Ascending aorta (tissue), 2 donors: ENCODE measurements at regions of chr4 and their contacts with region 1.

Region 1: GRCh38 chr4:76179398-76180318 is 31.5 kb upstream of the NUP54 start:
- DNase-seq: peak in 1 of 2 donors; percentile 92
- H3K4me3 ChIP-seq: no peak overlapping the region
- H3K27ac ChIP-seq: no peak overlapping the region
- H3K4me1 ChIP-seq: no peaks in the 10 kb centered on the region
- H3K27me3 ChIP-seq: no peaks in the 10 kb centered on the region
- CTCF ChIP-seq: peak; percentile 61 to 90 (median 88)

Region 2: GRCh38 chr4:75211408-75211807 is 968.2 kb before region 1 on chr4:
- intact Hi-C with region 1: no loop called
- DNase-seq: no peak
- H3K4me3 ChIP-seq: no peak overlapping the region
- H3K27ac ChIP-seq: no peak overlapping the region
- H3K4me1 ChIP-seq: no peaks in the 10 kb centered on the region
- H3K27me3 ChIP-seq: no peaks in the 10 kb centered on the region
- CTCF ChIP-seq: no peak

Region 3: GRCh38 chr4:75973766-75974165 is 205.9 kb before region 1 on chr4:
- intact Hi-C with region 1: no loop called
- DNase-seq: no peak
- H3K4me3 ChIP-seq: no peak overlapping the region
- H3K27ac ChIP-seq: no peak overlapping the region
- H3K4me1 ChIP-seq: no peaks in the 10 kb centered on the region
- H3K27me3 ChIP-seq: no peaks in the 10 kb centered on the region
- CTCF ChIP-seq: no peak

Region 4: DNA sequence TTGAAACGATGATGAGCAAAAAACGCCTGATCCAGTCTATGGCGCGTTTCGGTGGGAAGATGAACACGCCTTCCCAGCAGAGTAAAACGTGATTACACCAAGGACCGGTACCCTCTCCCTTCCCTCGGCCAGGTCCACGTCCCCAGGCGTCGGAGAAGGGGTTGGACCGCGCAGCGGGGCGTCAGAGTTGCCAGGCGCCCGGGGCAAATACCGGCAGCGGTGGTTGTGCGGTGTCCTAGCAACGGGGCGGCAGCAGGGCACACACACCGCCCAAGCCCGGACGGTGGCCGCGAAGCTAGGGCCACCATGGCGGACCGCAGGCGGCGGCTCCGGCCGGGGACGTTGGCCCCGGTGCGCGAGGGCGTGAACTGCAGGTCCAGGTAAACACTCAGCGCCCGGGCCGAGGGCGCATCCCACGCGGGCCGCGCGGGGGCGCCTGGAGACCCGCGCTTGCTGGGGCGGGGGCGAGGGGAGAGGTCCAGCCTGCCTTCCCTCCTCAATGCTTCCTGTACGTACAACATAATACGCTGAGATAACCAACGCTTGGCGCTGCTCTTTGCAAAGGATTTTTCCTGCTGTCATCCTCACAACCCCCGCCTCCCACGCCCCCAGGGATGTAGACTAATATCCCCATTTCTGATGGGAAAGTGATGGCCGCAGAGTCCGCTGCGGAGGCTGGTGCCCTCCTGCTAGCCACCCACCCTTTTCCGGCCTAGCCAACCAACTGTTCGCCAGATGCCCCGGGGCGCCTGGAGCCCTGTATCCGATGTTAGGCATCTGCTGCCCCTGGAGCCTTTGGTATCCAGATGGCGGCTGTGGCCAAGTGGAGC is 72.0 kb after region 1 on chr4 and contains the start of gene FAM47E:
- intact Hi-C with region 1: loop called (anchors 1 kb)
- DNase-seq: peak; percentile 10 to 83
- H3K4me3 ChIP-seq: peak within 1 kb of the TSS; percentile 75 to 76
- H3K27ac ChIP-seq: no peak within 1 kb of the TSS
- H3K4me1 ChIP-seq: no peaks in the 10 kb centered on the region
- H3K27me3 ChIP-seq: no peaks in the 10 kb centered on the region
- CTCF ChIP-seq: peak; percentile 17 to 42 (median 17)
- total RNA-seq, gene FAM47E: not detected

Region 5: GRCh38 chr4:76420762-76421581 is 241.3 kb after region 1 on chr4 and contains the start of gene CCDC158:
- intact Hi-C with region 1: loop called (anchors 5 kb)
- DNase-seq: no peak
- H3K4me3 ChIP-seq: peak within 1 kb of the TSS; percentile 62 to 65
- H3K27ac ChIP-seq: peak within 1 kb of the TSS in 1 of 2 donors; percentile 0
- H3K4me1 ChIP-seq: no peaks in the 10 kb centered on the region
- H3K27me3 ChIP-seq: no peaks in the 10 kb centered on the region
- CTCF ChIP-seq: no peak
- total RNA-seq, gene CCDC158: 1.1 TPM

Region 6: GRCh38 chr4:76504613-76505465 is 325.2 kb after region 1 on chr4:
- intact Hi-C with region 1: loop called (anchors 5 kb)
- DNase-seq: no peak
- H3K4me3 ChIP-seq: no peak overlapping the region
- H3K27ac ChIP-seq: no peak overlapping the region
- H3K4me1 ChIP-seq: no peaks in the 10 kb centered on the region
- H3K27me3 ChIP-seq: no peaks in the 10 kb centered on the region
- CTCF ChIP-seq: peak; percentile 60 to 72 (median 60)